HAP-1 (cell line): ENCODE measurements at regions of chr15 and their contacts with region 1.

Region 1: GRCh38 chr15:38002883-38003477 is 68.5 kb downstream of the TMCO5A start:
- DNase-seq: peak; percentile 18 to 66
- H3K4me3 ChIP-seq: no peak overlapping the region
- H3K4me1 ChIP-seq: no peaks in the 10 kb centered on the region
- H3K27me3 ChIP-seq: no peaks in the 10 kb centered on the region; the same call in 1 of the 2 replicates

Region 2: GRCh38 chr15:38354315-38354929 is 351.4 kb after region 1 on chr15:
- in situ Hi-C with region 1: loop called (anchors 10 kb)
- DNase-seq: peak; percentile 61 to 74
- H3K4me3 ChIP-seq: no peak overlapping the region
- H3K4me1 ChIP-seq: no peaks in the 10 kb centered on the region
- H3K27me3 ChIP-seq: no peaks in the 10 kb centered on the region